ENCODE measurements at regions of chr7 and their contacts with region 1.

Region 1: DNA sequence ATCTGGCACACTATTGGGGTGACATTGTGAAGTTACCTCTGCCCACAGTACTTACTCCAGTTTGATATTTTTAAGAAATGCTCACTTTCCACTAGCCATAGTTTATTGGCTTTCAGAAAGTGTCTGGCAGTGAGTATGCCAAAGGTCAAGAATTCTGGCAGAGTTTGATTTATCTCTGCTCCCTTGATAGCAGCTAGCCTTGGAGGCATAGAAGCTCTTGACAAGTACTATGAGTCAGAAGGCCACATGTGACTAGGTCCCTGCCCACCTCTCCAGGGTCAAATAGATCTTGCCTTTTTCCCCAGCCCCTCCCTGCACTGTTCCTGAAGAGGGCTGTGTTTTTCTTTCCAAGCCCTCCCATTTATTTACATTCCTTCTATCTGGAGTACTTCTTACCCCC is 202.2 kb downstream of the AUTS2 start:
- DNase-seq: peak in 1 of 2 experiments; percentile 56
- H3K4me3 ChIP-seq: no peak overlapping the region
- H3K27ac ChIP-seq: no peak overlapping the region
- H3K4me1 ChIP-seq: peaks cover 15% of the 10 kb centered on the region
- H3K27me3 ChIP-seq: no peaks in the 10 kb centered on the region
- CTCF ChIP-seq: no peak

Region 2: GRCh38 chr7:68146983-68147382 is 1653.5 kb before region 1 on chr7:
- CTCF ChIA-PET with region 1: no interaction called
- POLR2A ChIA-PET with region 1: interaction called, 14 read pairs
- intact Hi-C with region 1: no loop called
- DNase-seq: no peak
- H3K4me3 ChIP-seq: no peak overlapping the region
- H3K27ac ChIP-seq: no peak overlapping the region
- H3K4me1 ChIP-seq: no peaks in the 10 kb centered on the region
- H3K27me3 ChIP-seq: no peaks in the 10 kb centered on the region
- CTCF ChIP-seq: no peak

Region 3: GRCh38 chr7:69780377-69780776 is 20.1 kb before region 1 on chr7:
- CTCF ChIA-PET with region 1: no interaction called
- POLR2A ChIA-PET with region 1: no interaction called
- intact Hi-C with region 1: loop called (anchors 2 kb)
- DNase-seq: peak in 1 of 2 experiments; percentile 83
- H3K4me3 ChIP-seq: no peak overlapping the region
- H3K27ac ChIP-seq: 0 out of 2 replicates have a peak overlapping the region, but pooled peaks have one; percentile 12
- H3K4me1 ChIP-seq: peaks cover 23% of the 10 kb centered on the region
- H3K27me3 ChIP-seq: no peaks in the 10 kb centered on the region
- CTCF ChIP-seq: no peak

Region 4: DNA sequence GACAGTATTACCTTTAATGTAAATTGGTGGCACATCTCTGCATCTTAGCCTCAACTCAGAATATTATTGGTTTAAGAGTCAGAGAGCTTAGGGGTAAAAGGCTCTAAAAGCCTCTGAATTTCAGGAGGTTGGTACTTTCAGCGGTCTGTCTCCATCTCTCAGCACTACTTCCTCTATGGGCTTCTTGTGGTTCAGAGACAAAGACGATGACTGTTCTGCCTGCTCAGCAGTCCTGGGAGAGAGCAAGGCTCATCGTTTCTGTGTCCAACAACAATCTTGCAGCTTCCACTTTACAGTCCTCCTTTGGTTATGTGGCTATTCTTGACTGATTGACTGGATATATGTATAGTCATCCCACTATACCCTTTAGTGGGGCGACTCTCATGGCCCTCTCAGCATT is 192.4 kb after region 1 on chr7:
- CTCF ChIA-PET with region 1: no interaction called
- POLR2A ChIA-PET with region 1: no interaction called
- intact Hi-C with region 1: no loop called
- DNase-seq: no peak
- H3K4me3 ChIP-seq: no peak overlapping the region
- H3K27ac ChIP-seq: no peak overlapping the region
- H3K4me1 ChIP-seq: no peaks in the 10 kb centered on the region
- H3K27me3 ChIP-seq: peaks cover 9% of the 10 kb centered on the region; the same call in 1 of the 2 replicates
- CTCF ChIP-seq: no peak